Naive thymus-derived CD4-positive, alpha-beta T cell (primary cell): ENCODE measurements at regions of chr3 and their contacts with region 1.

Region 1: GRCh38 chr3:48556793-48557626 is at the start of gene PFKFB4:
- DNase-seq: peak; percentile 97 to 100 (median 99)
- ATAC-seq: peak; percentile 91
- H3K4me3 ChIP-seq: peak within 1 kb of the TSS; percentile 85
- H3K4me3 Mint-ChIP-seq: peak within 1 kb of the TSS; percentile 77 to 93 (median 84)
- H3K27ac ChIP-seq: peak within 1 kb of the TSS; percentile 52
- H3K27ac Mint-ChIP-seq: peak within 1 kb of the TSS; percentile 62 to 90 (median 80)
- H3K4me1 ChIP-seq: peaks cover 5 to 10% of the 10 kb centered on the region in 2 donors
- H3K4me1 Mint-ChIP-seq: peaks cover 11 to 66% (median 24%) of the 10 kb centered on the region in 7 donors
- H3K27me3 ChIP-seq: no peaks in the 10 kb centered on the region
- H3K27me3 Mint-ChIP-seq: peaks cover 0 to 3% (median 0%) of the 10 kb centered on the region in 5 donors
- total RNA-seq, gene PFKFB4: 3.0 to 64.2 (median 3.7) TPM

Region 2: GRCh38 chr3:47513125-47513929 is 1043.7 kb before region 1 on chr3 and contains the start of gene ELP6:
- CTCF ChIA-PET with region 1: no interaction called
- POLR2A ChIA-PET with region 1: no interaction called
- intact Hi-C with region 1: loop called in 1 of 2 experiments (anchors 10 kb)
- DNase-seq: peak; percentile 95 to 100 (median 99)
- ATAC-seq: peak; percentile 98
- H3K4me3 ChIP-seq: peak within 1 kb of the TSS; percentile 99
- H3K4me3 Mint-ChIP-seq: peak within 1 kb of the TSS; percentile 92 to 99 (median 97)
- H3K27ac ChIP-seq: peak within 1 kb of the TSS; percentile 95
- H3K27ac Mint-ChIP-seq: peak within 1 kb of the TSS; percentile 96 to 99 (median 98)
- H3K4me1 ChIP-seq: peaks cover 0 to 11% of the 10 kb centered on the region in 2 donors
- H3K4me1 Mint-ChIP-seq: peaks cover 6 to 31% (median 25%) of the 10 kb centered on the region in 7 donors
- H3K27me3 ChIP-seq: no peaks in the 10 kb centered on the region
- H3K27me3 Mint-ChIP-seq: peaks cover 0 to 8% (median 0%) of the 10 kb centered on the region in 5 donors
- total RNA-seq, gene ELP6: 18.8 to 43.1 (median 25.3) TPM

Region 3: DNA sequence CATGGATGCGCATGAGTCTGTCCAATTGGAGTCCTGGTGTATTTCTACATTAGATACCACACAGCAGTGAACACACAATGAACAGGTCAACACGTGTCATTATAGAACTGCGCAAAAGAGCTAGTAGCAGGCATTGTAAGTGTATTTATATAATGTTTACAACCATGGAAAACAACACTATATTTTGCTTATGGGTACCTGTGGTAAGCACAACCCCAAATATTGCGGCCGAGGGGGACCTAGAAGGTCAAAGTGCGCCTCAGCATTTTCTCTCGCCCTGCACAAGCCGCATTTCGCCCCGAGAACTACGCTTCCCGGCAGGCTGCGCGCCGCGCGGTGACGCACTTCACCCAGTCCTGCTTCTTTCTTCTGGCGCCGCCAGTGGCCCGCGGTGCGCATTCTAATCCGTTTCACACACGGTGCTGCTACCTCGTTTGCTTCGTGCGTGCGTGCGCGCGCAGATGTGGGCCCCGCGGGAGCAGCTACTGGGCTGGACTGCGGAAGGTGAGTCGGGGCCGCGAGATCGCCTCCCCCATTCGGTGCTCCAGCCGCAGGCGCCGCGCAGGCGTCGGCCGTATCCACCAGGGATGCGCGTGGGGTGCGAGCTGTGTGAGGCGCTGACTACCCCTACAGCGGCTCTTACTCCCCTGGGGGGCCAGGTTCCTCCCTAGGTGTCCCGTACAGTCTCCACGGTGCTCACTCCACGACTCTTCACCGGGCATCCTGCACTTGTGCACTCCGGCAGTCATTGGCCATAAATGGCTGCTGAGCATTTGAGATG is 316.1 kb before region 1 on chr3 and contains the start of gene ZNF589:
- CTCF ChIA-PET with region 1: interaction called, 3 read pairs
- POLR2A ChIA-PET with region 1: no interaction called
- intact Hi-C with region 1: loop called (anchors 1 to 10 kb)
- DNase-seq: peak; percentile 87 to 96 (median 92)
- ATAC-seq: peak; percentile 99
- H3K4me3 ChIP-seq: peak within 1 kb of the TSS; percentile 92
- H3K4me3 Mint-ChIP-seq: peak within 1 kb of the TSS; percentile 82 to 94 (median 92)
- H3K27ac ChIP-seq: peak within 1 kb of the TSS; percentile 79
- H3K27ac Mint-ChIP-seq: peak within 1 kb of the TSS; percentile 88 to 96 (median 93)
- H3K4me1 ChIP-seq: peaks cover 7 to 14% of the 10 kb centered on the region in 2 donors
- H3K4me1 Mint-ChIP-seq: peaks cover 5 to 36% (median 25%) of the 10 kb centered on the region in 7 donors
- H3K27me3 ChIP-seq: no peaks in the 10 kb centered on the region
- H3K27me3 Mint-ChIP-seq: no peaks in the 10 kb centered on the region
- total RNA-seq, gene ZNF589: 37.7 to 64.0 (median 40.2) TPM

Region 4: GRCh38 chr3:48400824-48401433 is 156.1 kb before region 1 on chr3:
- CTCF ChIA-PET with region 1: interaction called, 187 read pairs
- POLR2A ChIA-PET with region 1: interaction called, 3 read pairs
- intact Hi-C with region 1: loop called (anchors 1 to 2 kb)
- DNase-seq: peak; percentile 33 to 76 (median 66)
- ATAC-seq: peak; percentile 86
- H3K4me3 ChIP-seq: no peak overlapping the region
- H3K4me3 Mint-ChIP-seq: no peak overlapping the region
- H3K27ac ChIP-seq: no peak overlapping the region
- H3K27ac Mint-ChIP-seq: peak overlapping the region in 1 of 9 donors; percentile 47
- H3K4me1 ChIP-seq: no peaks in the 10 kb centered on the region
- H3K4me1 Mint-ChIP-seq: peaks cover 0 to 3% (median 0%) of the 10 kb centered on the region in 7 donors
- H3K27me3 ChIP-seq: no peaks in the 10 kb centered on the region
- H3K27me3 Mint-ChIP-seq: peaks cover 0 to 7% (median 3%) of the 10 kb centered on the region in 5 donors

Region 5: GRCh38 chr3:48514436-48515227 is 42.4 kb before region 1 on chr3:
- CTCF ChIA-PET with region 1: interaction called, 25 read pairs
- POLR2A ChIA-PET with region 1: no interaction called
- intact Hi-C with region 1: loop called in 1 of 2 experiments (anchors 2 kb)
- DNase-seq: peak in 6 of 9 donors; percentile 48 to 67 (median 54)
- ATAC-seq: peak; percentile 66
- H3K4me3 ChIP-seq: peak overlapping the region; percentile 25
- H3K4me3 Mint-ChIP-seq: peak overlapping the region; percentile 62 to 82 (median 72)
- H3K27ac ChIP-seq: no peak overlapping the region
- H3K27ac Mint-ChIP-seq: peak overlapping the region; percentile 55 to 91 (median 78)
- H3K4me1 ChIP-seq: peaks cover 35 to 61% of the 10 kb centered on the region in 2 donors
- H3K4me1 Mint-ChIP-seq: peaks cover 48 to 85% (median 75%) of the 10 kb centered on the region in 7 donors
- H3K27me3 ChIP-seq: no peaks in the 10 kb centered on the region
- H3K27me3 Mint-ChIP-seq: no peaks in the 10 kb centered on the region

Region 6: DNA sequence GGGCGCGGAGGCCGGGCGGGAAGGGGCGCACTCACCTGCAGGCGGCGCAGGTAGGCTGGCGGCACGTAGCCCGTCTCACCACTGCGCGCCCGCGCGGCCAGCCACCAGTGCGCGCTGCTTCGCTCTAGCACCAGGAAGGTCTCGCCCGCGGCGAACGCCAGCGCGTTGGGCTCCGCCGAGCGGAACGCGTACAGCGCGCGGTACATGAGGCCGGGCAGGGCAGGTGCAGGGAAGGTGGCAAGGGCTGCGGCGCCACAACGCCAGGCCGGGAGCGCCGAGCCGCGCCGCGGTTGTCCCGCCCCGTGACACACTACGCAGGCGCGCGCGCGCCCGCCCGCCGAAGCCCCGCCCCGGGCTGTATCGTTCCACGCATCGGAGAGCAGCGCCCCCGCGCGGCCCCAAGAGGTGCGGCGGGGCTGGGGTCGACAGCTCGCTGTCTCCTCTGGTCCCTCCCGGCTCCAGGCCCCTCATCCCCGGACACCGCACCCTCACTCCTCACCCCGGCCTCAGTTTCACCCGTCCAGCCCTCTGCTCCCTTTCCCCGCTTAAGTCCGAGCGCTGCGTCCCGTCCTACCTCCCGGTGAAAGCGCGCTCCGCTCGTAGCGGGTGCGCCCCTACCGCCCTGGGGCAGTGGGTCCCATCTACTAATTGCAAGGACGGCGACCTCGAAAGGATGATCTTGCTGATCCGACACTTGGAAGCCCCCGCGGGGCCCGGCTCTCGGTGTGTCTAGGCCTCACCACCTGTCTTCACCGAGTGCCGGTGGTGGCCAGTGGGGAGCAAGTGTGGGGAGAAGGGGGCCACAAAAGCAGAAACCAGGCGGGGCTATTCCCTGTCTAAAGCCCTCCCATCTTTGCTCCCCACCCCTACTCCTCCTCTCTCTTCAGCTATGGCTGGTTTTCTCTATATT is 128.8 kb after region 1 on chr3 and contains the start of gene NCKIPSD:
- CTCF ChIA-PET with region 1: no interaction called
- POLR2A ChIA-PET with region 1: no interaction called
- intact Hi-C with region 1: loop called in 1 of 2 experiments (anchors 1 kb)
- DNase-seq: peak; percentile 83 to 96 (median 92)
- ATAC-seq: peak; percentile 97
- H3K4me3 ChIP-seq: peak within 1 kb of the TSS; percentile 92
- H3K4me3 Mint-ChIP-seq: peak within 1 kb of the TSS; percentile 88 to 95 (median 93)
- H3K27ac ChIP-seq: peak within 1 kb of the TSS; percentile 79
- H3K27ac Mint-ChIP-seq: peak within 1 kb of the TSS; percentile 73 to 94 (median 89)
- H3K4me1 ChIP-seq: peaks cover 8 to 18% of the 10 kb centered on the region in 2 donors
- H3K4me1 Mint-ChIP-seq: peaks cover 29 to 38% (median 33%) of the 10 kb centered on the region in 7 donors
- H3K27me3 ChIP-seq: no peaks in the 10 kb centered on the region
- H3K27me3 Mint-ChIP-seq: no peaks in the 10 kb centered on the region
- total RNA-seq, gene NCKIPSD: 13.7 to 42.1 (median 20.3) TPM

Region 7: GRCh38 chr3:49021813-49022687 is 465.0 kb after region 1 on chr3 and contains the start of gene NDUFAF3:
- CTCF ChIA-PET with region 1: no interaction called
- POLR2A ChIA-PET with region 1: no interaction called
- intact Hi-C with region 1: loop called (anchors 5 kb)
- DNase-seq: peak; percentile 84 to 96 (median 89)
- ATAC-seq: peak; percentile 89
- H3K4me3 ChIP-seq: peak within 1 kb of the TSS; percentile 99
- H3K4me3 Mint-ChIP-seq: peak within 1 kb of the TSS; percentile 92 to 99 (median 97)
- H3K27ac ChIP-seq: peak within 1 kb of the TSS; percentile 98
- H3K27ac Mint-ChIP-seq: peak within 1 kb of the TSS; percentile 95 to 99 (median 98)
- H3K4me1 ChIP-seq: peaks cover 24 to 25% of the 10 kb centered on the region in 2 donors
- H3K4me1 Mint-ChIP-seq: peaks cover 21 to 61% (median 47%) of the 10 kb centered on the region in 7 donors
- H3K27me3 ChIP-seq: no peaks in the 10 kb centered on the region
- H3K27me3 Mint-ChIP-seq: peaks cover 0 to 2% (median 0%) of the 10 kb centered on the region in 5 donors
- total RNA-seq, gene NDUFAF3: 63.8 to 110 (median 89.3) TPM